ENCODE measurements at regions of chr5 and their contacts with region 1.

Region 1: GRCh38 chr5:157476702-157477408 is 16.8 kb downstream of the NIPAL4 start:
- DNase-seq: peak; percentile 70 to 75 (median 72)
- ATAC-seq: peak; percentile 95
- H3K4me3 ChIP-seq: no peak overlapping the region
- H3K27ac ChIP-seq: no peak overlapping the region
- H3K4me1 ChIP-seq: no peaks in the 10 kb centered on the region; a peak in 1 of 5 replicates
- H3K27me3 ChIP-seq: peaks cover 0 to 25% of the 10 kb centered on the region in 2 experiments; a peak in 3 of 5 replicates
- CTCF ChIP-seq: peak; percentile 71 to 92 (median 80)
- EP300 ChIP-seq: no peak
- POLR2A ChIP-seq: no peak
- RAD21 ChIP-seq: peak; percentile 84 to 87

Region 2: GRCh38 chr5:157219491-157220271 is 257.2 kb before region 1 on chr5:
- CTCF ChIA-PET with region 1: no interaction called
- POLR2A ChIA-PET with region 1: no interaction called
- in situ Hi-C with region 1: no loop called
- intact Hi-C with region 1: no loop called
- DNase-seq: no peak
- ATAC-seq: no peak
- H3K4me3 ChIP-seq: no peak overlapping the region
- H3K27ac ChIP-seq: no peak overlapping the region
- H3K4me1 ChIP-seq: no peaks in the 10 kb centered on the region; a peak in 1 of 5 replicates
- H3K27me3 ChIP-seq: no peaks in the 10 kb centered on the region
- CTCF ChIP-seq: no peak
- EP300 ChIP-seq: no peak
- POLR2A ChIP-seq: no peak
- RAD21 ChIP-seq: no peak

Region 3: GRCh38 chr5:157245477-157245876 is 231.4 kb before region 1 on chr5:
- CTCF ChIA-PET with region 1: no interaction called
- POLR2A ChIA-PET with region 1: interaction called, 4 read pairs
- in situ Hi-C with region 1: loop called (anchors 10 kb)
- intact Hi-C with region 1: loop called (anchors 5 kb)
- DNase-seq: no peak
- ATAC-seq: no peak
- H3K4me3 ChIP-seq: no peak overlapping the region
- H3K27ac ChIP-seq: no peak overlapping the region
- H3K4me1 ChIP-seq: no peaks in the 10 kb centered on the region; a peak in 1 of 5 replicates
- H3K27me3 ChIP-seq: no peaks in the 10 kb centered on the region
- CTCF ChIP-seq: no peak
- EP300 ChIP-seq: no peak
- POLR2A ChIP-seq: no peak
- RAD21 ChIP-seq: no peak

Region 4: DNA sequence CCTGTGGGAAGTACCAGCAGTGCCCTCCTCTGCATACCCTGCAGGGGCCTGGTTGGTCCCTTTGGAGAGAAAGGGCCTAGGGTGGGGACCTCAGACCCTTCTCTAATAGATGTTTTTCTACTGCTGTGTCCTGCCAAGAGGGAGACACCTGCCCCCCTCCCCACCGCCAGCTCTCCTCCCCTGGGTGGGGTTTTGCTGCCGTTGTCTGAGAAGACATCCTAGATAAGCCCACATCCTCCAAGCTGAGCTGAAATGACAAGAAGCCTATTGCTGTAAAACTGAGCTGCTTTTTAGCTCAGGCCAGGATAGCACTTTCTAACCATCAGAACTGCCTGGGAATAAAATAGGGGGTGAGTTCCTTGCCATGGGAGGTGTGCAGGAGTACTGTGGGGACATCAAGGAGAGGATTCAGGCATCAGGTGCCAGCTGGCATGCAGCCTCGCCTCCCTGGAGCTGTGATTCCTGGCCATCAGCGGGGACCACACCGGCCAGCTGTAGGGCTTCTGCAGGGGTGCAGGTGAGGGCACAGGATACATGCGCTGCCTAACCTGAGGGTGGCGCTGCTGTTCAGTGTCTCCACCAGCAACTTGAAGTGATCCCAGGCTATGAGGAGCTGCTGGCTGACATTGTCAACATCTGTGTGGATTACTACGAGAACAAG is 173.1 kb before region 1 on chr5:
- CTCF ChIA-PET with region 1: no interaction called
- POLR2A ChIA-PET with region 1: no interaction called
- in situ Hi-C with region 1: no loop called
- intact Hi-C with region 1: no loop called
- DNase-seq: peak; percentile 18 to 39 (median 37)
- ATAC-seq: peak; percentile 94
- H3K4me3 ChIP-seq: no peak overlapping the region
- H3K27ac ChIP-seq: no peak overlapping the region
- H3K4me1 ChIP-seq: no peaks in the 10 kb centered on the region
- H3K27me3 ChIP-seq: peaks cover 10 to 13% of the 10 kb centered on the region in 2 experiments
- CTCF ChIP-seq: peak; percentile 48 to 54 (median 51); a peak in 5 of 6 replicates
- EP300 ChIP-seq: no peak
- POLR2A ChIP-seq: no peak
- RAD21 ChIP-seq: peak in 1 of 2 experiments; percentile 16; a peak in 1 of 4 replicates

Region 5: DNA sequence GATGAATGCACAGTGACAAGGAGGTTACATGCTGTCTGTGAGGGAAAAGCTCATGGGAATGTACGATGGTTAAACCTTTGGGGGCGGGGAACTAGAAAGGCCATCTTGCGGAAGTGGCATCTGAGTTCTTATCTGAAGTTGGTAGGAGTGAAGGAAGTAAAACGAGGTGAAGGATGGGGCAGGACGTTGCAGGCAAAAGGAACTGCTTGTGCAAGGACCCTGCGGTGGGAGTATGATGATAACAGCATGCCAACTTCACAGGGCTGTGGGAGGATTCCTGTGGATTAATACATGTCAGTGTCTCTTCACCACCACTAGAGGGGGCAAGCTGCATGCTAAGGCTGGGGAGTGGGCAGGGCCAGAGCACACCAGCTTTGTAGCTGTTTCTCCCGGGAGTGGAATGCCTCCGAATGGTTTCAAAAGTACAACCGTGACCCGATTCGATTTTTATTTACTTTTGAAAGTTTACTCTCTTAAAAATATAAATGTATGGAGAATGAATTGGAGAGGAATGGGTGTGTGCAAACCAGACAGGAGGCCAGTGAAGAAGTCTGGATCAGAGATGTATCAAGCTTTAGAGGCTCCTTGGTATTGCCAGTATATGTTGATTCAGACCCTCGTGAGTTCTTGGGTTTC is 148.5 kb before region 1 on chr5:
- CTCF ChIA-PET with region 1: interaction called, 12 read pairs
- POLR2A ChIA-PET with region 1: interaction called, 3 read pairs
- in situ Hi-C with region 1: no loop called
- intact Hi-C with region 1: loop called (anchors 1 kb)
- DNase-seq: peak; percentile 77 to 87 (median 82)
- ATAC-seq: peak; percentile 100
- H3K4me3 ChIP-seq: no peak overlapping the region
- H3K27ac ChIP-seq: no peak overlapping the region
- H3K4me1 ChIP-seq: no peaks in the 10 kb centered on the region; a peak in 1 of 5 replicates
- H3K27me3 ChIP-seq: peaks cover 0 to 31% of the 10 kb centered on the region in 2 experiments; a peak in 2 of 5 replicates
- CTCF ChIP-seq: peak; percentile 86 to 94 (median 90)
- EP300 ChIP-seq: no peak
- POLR2A ChIP-seq: no peak
- RAD21 ChIP-seq: peak; percentile 81 to 84

Region 6: GRCh38 chr5:157366741-157367674 is 109.8 kb before region 1 on chr5:
- CTCF ChIA-PET with region 1: interaction called, 4 read pairs
- POLR2A ChIA-PET with region 1: no interaction called
- in situ Hi-C with region 1: no loop called
- intact Hi-C with region 1: loop called (anchors 2 kb)
- DNase-seq: peak; percentile 19 to 39 (median 24)
- ATAC-seq: peak; percentile 82
- H3K4me3 ChIP-seq: no peak overlapping the region
- H3K27ac ChIP-seq: no peak overlapping the region
- H3K4me1 ChIP-seq: peaks cover 0 to 8% of the 10 kb centered on the region in 2 experiments; a peak in 4 of 5 replicates
- H3K27me3 ChIP-seq: 0 out of 5 replicates have a peak, but pooled peaks cover 0 to 8% of the 10 kb centered on the region in 2 experiments
- CTCF ChIP-seq: peak; percentile 48 to 66 (median 57); a peak in 4 of 6 replicates
- EP300 ChIP-seq: no peak
- POLR2A ChIP-seq: no peak
- RAD21 ChIP-seq: peak; percentile 28 to 60; a peak in 3 of 4 replicates

Region 7: GRCh38 chr5:157464519-157465171 is 12.2 kb before region 1 on chr5:
- CTCF ChIA-PET with region 1: no interaction called
- POLR2A ChIA-PET with region 1: no interaction called
- in situ Hi-C with region 1: no loop called
- intact Hi-C with region 1: no loop called
- DNase-seq: peak; percentile 48 to 56 (median 54)
- ATAC-seq: peak; percentile 95
- H3K4me3 ChIP-seq: no peak overlapping the region
- H3K27ac ChIP-seq: no peak overlapping the region
- H3K4me1 ChIP-seq: peaks cover 5 to 7% of the 10 kb centered on the region in 2 experiments; a peak in 3 of 5 replicates
- H3K27me3 ChIP-seq: peaks cover 8 to 21% of the 10 kb centered on the region in 2 experiments; a peak in 2 of 5 replicates
- CTCF ChIP-seq: no peak
- EP300 ChIP-seq: peak; percentile 47; the same call in 1 of the 2 replicates
- POLR2A ChIP-seq: no peak
- RAD21 ChIP-seq: no peak

Region 8: GRCh38 chr5:157718519-157718918 is 241.7 kb after region 1 on chr5:
- CTCF ChIA-PET with region 1: interaction called, 3 read pairs
- POLR2A ChIA-PET with region 1: no interaction called
- in situ Hi-C with region 1: no loop called
- intact Hi-C with region 1: loop called (anchors 5 kb)
- DNase-seq: peak; percentile 22 to 62 (median 42)
- ATAC-seq: peak; percentile 96
- H3K4me3 ChIP-seq: no peak overlapping the region
- H3K27ac ChIP-seq: no peak overlapping the region
- H3K4me1 ChIP-seq: peaks cover 3 to 5% of the 10 kb centered on the region in 2 experiments; a peak in 2 of 5 replicates
- H3K27me3 ChIP-seq: no peaks in the 10 kb centered on the region
- CTCF ChIP-seq: peak; percentile 51 to 75 (median 54); a peak in 4 of 6 replicates
- EP300 ChIP-seq: no peak
- POLR2A ChIP-seq: no peak
- RAD21 ChIP-seq: peak; percentile 76 to 83